ENCODE measurements at regions of chr2 and their contacts with region 1.

Region 1: DNA sequence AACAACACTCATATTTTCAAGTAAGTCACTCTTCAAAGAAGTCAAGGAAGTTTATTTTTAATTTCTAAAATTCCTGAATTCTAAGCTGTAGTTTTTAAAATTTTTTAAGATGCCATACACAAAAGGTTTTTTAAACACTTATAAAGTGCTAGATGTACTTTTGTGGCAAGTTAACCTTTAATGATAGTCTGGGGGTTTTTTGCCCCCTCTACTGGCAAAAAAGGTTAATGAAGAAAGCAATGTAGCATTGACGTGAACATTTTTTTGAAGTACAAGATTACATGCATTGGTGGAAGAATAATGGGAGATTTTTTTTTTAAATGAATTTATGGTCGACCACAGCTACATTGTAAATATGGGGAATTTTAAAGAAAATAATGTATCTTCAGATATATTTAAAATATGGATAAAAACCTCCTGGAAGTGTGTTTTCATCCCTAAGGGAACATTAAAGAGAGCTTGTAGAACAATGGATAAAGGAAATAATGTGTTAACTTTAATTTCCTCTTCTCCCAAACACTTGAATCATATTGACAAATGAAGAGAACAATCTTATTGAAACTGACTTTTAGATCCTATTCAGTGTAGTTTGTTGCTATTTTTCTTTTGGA is 12.6 kb downstream of the ITPRID2 start:
- DNase-seq: peak; percentile 89
- H3K4me3 ChIP-seq: peak overlapping the region in 1 of 3 experiments; percentile 23
- H3K27ac ChIP-seq: peak overlapping the region; percentile 29
- H3K4me1 ChIP-seq: peaks cover 48% of the 10 kb centered on the region
- H3K27me3 ChIP-seq: no peaks in the 10 kb centered on the region
- CTCF ChIP-seq: peak; percentile 40 to 50
- POLR2A ChIP-seq: no peak

Region 2: DNA sequence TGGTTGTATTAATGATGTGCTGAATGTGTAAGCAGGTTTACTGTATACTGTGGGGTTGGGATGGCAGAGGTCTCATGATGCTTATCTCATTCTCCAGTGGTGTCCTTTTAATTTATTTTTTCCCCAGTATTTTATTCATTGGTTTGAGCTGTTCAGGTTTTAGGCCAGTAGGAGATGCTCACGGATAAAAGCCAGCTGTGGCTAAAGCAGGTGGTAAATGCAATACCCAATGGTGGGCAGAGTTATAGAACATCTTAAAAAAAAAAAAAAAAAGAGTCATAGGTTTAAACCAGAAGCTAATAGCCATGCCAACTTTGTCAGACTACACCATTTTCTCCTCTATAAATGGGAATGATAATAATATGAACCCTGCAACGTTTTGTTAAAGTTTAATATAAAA is 166.1 kb before region 1 on chr2:
- CTCF ChIA-PET with region 1: interaction called, 415 read pairs
- POLR2A ChIA-PET with region 1: interaction called, 8 read pairs
- dilution Hi-C with region 1: no loop called
- intact Hi-C with region 1: loop called (anchors 1 kb)
- DNase-seq: peak; percentile 28
- H3K4me3 ChIP-seq: no peak overlapping the region
- H3K27ac ChIP-seq: no peak overlapping the region
- H3K4me1 ChIP-seq: peaks cover 2% of the 10 kb centered on the region
- H3K27me3 ChIP-seq: no peaks in the 10 kb centered on the region
- CTCF ChIP-seq: peak; percentile 19 to 20
- POLR2A ChIP-seq: no peak

Region 3: DNA sequence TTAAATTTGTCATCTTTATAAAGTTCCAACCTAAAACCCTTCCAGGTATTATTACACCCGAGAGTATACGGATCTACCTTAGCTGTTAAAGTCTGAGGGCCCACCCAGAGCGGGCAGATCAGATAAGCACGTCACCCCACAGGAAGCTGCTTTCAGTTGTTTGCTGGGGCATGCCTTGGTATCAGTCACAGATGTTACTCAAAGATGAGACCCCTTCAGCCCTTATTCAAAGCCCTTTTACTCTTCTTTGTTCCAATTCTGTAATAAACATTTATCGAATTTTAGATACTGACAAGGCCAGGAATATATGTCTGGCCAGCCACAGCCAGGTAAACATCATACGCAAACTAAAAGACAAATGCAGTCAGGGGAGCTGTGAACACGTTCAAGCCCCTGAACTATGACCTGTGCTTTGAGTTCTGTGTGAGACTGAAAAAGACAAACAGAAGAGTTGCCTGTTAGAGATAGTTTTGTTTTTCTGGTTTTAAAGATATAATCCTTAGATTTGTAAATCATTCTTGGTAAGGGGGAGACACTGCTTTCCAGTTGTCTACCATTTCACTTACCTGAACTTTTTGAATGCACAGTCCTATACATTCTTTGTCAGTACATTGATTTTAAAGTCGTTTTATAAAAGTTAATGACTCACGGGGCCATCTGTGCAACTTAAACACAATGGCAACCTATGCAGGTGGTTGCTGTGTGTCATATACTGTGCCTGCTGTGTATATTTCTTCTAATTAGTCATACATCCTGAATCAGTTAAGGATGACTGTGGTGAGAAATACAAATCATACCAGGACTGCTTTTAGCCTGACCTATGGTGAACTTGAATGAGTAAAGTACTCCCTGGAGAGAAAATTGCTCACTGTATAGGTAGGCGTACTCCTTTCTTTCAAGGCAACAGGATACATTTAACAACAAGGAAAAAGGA is 113.1 kb before region 1 on chr2:
- CTCF ChIA-PET with region 1: interaction called, 14 read pairs
- POLR2A ChIA-PET with region 1: no interaction called
- dilution Hi-C with region 1: no loop called
- intact Hi-C with region 1: loop called (anchors 1 kb)
- DNase-seq: peak; percentile 99
- H3K4me3 ChIP-seq: no peak overlapping the region
- H3K27ac ChIP-seq: peak overlapping the region; percentile 96
- H3K4me1 ChIP-seq: peaks cover 45% of the 10 kb centered on the region
- H3K27me3 ChIP-seq: no peaks in the 10 kb centered on the region
- CTCF ChIP-seq: no peak
- POLR2A ChIP-seq: peak; percentile 72

Region 4: DNA sequence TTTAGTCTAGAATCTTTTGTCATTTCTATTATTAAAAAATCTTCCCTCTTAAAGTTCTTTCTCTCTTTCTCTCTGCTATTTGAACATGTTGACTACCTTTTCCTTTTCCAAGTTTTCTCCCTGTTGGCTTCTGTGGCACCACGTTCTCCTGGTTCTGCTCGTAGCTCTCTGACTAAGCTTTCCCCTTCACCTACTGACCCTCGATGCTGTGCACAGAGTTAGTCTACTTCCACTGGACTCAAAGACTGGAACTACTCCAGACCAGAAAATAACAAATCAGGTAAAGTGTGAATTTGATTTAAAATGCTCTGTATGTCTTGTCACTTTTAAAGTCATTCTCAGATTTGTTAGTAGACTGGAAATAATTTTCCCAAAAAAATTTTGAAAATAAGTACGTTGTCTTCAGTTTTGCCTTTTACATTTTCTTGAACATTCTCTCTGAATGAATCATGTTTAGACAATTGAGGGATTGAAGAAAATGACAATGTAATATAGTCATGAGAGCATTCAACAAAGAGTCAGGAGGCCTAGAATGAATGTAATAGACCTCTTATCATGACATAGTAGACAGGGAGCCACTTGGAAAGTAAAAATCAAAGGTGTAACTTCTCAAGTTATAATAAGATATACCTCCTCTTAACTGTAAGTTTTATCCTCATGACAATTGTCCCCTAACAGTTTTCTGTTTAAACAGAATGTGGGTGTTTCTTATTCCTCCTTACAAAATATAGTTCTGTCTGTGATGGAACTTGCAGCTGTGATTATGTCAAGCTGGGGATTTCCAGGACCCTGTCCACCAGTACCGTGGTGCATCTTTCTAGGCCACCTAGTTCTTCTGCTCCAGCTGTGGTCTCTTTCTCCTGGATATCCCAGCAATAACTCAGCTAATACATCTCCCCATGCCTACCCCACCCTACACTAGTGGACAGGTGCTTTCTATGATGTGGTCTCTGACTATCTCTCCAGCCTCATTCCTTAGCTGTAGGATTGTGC is 12.9 kb after region 1 on chr2:
- CTCF ChIA-PET with region 1: interaction called, 24 read pairs
- POLR2A ChIA-PET with region 1: interaction called, 4 read pairs
- dilution Hi-C with region 1: no loop called
- intact Hi-C with region 1: no loop called
- DNase-seq: peak; percentile 79
- H3K4me3 ChIP-seq: no peak overlapping the region
- H3K27ac ChIP-seq: peak overlapping the region; percentile 14
- H3K4me1 ChIP-seq: peaks cover 38% of the 10 kb centered on the region
- H3K27me3 ChIP-seq: no peaks in the 10 kb centered on the region
- CTCF ChIP-seq: no peak
- POLR2A ChIP-seq: no peak

Region 5: DNA sequence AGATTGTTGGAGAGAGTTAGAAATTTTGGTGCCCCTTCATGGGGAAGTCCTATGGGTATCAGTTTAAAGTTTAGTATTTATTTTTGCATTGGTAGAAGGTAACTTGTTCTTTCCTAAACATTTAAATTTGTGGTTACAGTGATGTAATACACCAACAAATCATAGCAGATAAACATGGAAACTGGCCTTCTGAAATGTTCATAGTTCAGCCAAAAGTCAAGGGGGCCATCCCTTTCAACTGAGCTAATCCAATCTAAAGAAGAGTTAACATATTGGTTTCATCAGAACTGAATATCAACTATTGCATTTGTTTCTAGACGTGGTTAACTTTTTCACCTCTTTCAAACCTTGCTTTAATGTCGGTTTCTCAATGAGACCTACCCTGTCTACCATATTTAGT is 127.8 kb after region 1 on chr2:
- CTCF ChIA-PET with region 1: no interaction called
- POLR2A ChIA-PET with region 1: no interaction called
- dilution Hi-C with region 1: no loop called
- intact Hi-C with region 1: no loop called
- DNase-seq: no peak
- H3K4me3 ChIP-seq: no peak overlapping the region
- H3K27ac ChIP-seq: no peak overlapping the region
- H3K4me1 ChIP-seq: no peaks in the 10 kb centered on the region
- H3K27me3 ChIP-seq: no peaks in the 10 kb centered on the region
- CTCF ChIP-seq: no peak
- POLR2A ChIP-seq: no peak

Region 6: DNA sequence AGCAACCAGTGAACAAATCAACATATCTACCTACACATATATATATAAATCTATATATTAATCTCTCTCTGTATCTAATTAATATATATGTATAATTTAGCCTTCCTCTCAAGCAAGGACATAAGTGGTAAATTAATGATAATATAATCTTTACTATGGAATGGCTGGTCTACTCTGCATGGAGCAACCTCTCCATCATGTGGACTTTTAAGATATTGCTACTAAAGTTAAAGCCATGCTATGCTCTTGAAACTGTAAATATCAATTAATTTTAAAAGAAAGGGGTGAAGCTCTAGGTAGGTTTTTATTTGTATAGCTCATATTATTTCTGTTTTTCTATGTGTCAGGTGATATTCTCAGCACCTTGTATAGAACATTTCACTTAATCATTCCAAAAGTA is 228.5 kb after region 1 on chr2:
- CTCF ChIA-PET with region 1: interaction called, 5 read pairs
- POLR2A ChIA-PET with region 1: no interaction called
- dilution Hi-C with region 1: no loop called
- intact Hi-C with region 1: loop called (anchors 5 kb)
- DNase-seq: peak; percentile 65
- H3K4me3 ChIP-seq: no peak overlapping the region
- H3K27ac ChIP-seq: peak overlapping the region; percentile 83
- H3K4me1 ChIP-seq: peaks cover 29% of the 10 kb centered on the region
- H3K27me3 ChIP-seq: no peaks in the 10 kb centered on the region
- CTCF ChIP-seq: peak in 1 of 2 donors; percentile 25
- POLR2A ChIP-seq: no peak

Measured in endothelial cell of umbilical vein (primary cell).